ENCODE measurements at regions of chr11 and their contacts with region 1.

Region 1: GRCh38 chr11:114197799-114198500 is 98.2 kb upstream of the NNMT start:
- DNase-seq: peak; percentile 50 to 93
- H3K4me3 ChIP-seq: peak overlapping the region in 1 of 2 donors; percentile 31
- H3K27ac ChIP-seq: peak overlapping the region; percentile 88 to 98
- H3K4me1 ChIP-seq: peaks cover 45 to 83% of the 10 kb centered on the region in 2 donors
- H3K27me3 ChIP-seq: no peaks in the 10 kb centered on the region
- CTCF ChIP-seq: no peak

Region 2: GRCh38 chr11:113634940-113635575 is 562.9 kb before region 1 on chr11:
- intact Hi-C with region 1: no loop called
- DNase-seq: no peak
- H3K4me3 ChIP-seq: no peak overlapping the region
- H3K27ac ChIP-seq: peak overlapping the region in 1 of 2 donors; percentile 20
- H3K4me1 ChIP-seq: peaks cover 4 to 19% of the 10 kb centered on the region in 2 donors
- H3K27me3 ChIP-seq: no peaks in the 10 kb centered on the region
- CTCF ChIP-seq: no peak

Region 3: DNA sequence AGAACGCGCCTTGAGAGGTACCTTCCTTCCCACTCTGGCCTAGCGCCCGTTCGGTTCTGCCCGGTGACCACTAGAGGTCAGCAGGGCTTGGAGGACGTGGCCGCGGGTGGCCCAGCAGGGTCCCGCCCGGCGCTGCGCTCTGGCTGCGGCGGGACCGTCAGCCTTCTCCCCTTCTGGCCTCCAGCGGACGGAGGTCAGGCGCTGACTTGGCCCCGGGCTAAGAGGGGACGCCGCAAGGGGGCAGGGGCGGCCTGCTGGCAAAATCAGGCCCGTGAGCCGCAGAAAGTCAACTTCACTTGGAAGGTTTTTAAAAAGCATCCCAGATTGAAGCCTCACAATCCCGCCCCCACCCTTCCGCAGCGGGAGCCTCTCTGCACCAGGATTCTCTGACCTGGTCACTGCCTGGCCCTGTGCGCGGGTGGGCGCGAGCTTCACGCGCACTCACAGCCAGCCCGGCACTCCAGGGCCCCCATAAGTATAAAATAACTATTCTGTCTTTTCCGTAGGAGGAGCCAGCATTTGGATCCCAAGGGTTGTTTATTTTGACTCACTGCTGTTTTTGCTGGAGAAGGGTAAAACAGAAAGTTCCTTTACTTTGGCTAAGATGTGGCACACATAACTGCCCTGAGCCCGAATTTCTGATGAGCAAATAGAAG is 161.7 kb before region 1 on chr11:
- intact Hi-C with region 1: loop called (anchors 5 kb)
- DNase-seq: peak; percentile 27 to 88
- H3K4me3 ChIP-seq: peak overlapping the region; percentile 57 to 59
- H3K27ac ChIP-seq: peak overlapping the region; percentile 77 to 87
- H3K4me1 ChIP-seq: peaks cover 0 to 26% of the 10 kb centered on the region in 2 donors
- H3K27me3 ChIP-seq: no peaks in the 10 kb centered on the region
- CTCF ChIP-seq: peak; percentile 88 to 91 (median 90)

Region 4: DNA sequence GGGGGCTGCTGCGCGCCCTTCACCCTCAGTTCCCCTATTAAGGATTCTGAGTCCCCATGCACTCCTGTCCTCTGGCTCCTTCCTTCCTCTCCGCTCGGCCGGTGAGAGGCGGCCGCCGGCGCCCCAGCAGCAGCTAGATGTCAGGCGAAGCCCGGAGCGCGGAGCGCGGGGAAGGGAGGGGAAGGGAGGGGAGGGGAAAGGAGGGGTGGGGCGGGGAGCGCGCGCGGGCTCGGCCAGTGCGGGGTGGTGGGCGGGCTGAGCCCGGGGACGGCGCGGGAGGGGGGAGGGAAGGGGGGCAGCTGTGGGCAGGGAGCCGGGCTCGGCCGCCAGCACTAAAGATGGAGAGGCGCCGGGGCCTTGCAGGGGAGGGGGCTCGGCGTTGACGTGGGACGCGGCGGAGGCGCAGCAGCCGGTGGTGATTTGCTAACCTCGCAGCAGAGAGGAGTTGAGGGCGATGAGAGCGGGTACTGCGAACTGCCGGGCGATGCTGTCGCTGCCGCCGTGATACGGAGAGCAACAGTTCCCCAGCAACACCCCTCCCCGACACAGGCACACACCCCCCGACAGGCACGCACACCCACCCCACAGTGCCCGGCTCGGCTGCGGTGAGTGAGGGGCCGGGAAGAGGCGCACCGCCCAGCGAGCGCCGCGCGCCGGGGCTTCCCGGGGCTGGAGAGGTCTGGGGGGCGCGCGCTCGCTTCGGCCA is 138.5 kb before region 1 on chr11 and contains the start of gene ZBTB16:
- intact Hi-C with region 1: loop called (anchors 5 kb)
- DNase-seq: peak; percentile 54 to 94
- H3K4me3 ChIP-seq: peak within 1 kb of the TSS; percentile 87 to 99
- H3K27ac ChIP-seq: peak within 1 kb of the TSS; percentile 97 to 98
- H3K4me1 ChIP-seq: peaks cover 4 to 17% of the 10 kb centered on the region in 2 donors
- H3K27me3 ChIP-seq: no peaks in the 10 kb centered on the region
- CTCF ChIP-seq: peak; percentile 6 to 75 (median 40)
- total RNA-seq, gene ZBTB16: 344 TPM

Region 5: DNA sequence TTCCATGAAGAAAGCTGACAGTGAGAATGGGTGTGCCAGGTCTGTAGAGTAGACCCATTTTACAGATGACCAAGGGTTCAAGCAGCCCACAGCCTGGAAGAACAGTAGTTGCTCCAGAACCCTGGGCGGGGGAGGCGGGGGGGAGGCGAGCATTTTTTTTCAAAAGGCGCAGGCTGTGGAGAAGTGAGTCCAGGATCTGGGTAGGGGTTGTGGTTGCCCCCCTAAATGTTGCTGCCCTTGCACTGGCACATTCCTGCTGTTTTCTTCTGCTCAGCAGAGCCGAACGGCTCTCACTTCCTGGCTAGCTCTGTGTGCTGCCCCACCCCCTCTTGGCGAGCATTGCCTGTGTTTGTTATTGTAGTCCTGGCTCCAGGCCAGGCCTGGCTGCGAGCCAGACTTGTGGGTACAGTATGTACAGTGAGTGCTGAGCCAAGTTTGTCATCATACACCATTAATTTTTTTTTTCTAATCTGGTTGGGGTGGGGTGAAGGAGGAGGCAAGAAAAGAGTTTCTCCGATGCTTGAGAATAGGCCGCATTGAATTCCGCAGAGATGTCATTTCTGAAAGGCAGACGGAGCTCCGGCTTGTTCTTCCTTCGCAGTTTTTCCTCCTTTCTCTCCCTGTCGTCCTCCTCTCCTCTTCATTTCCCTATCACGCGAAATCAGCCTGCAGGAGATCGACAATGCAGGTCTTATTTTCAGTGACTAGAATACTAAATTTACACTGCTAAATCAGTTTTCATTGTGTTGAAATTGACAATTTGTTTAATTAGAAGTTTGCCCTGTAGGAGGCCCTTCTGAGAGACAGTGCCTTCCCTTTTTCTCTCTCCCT is 37.9 kb before region 1 on chr11:
- intact Hi-C with region 1: no loop called
- DNase-seq: peak; percentile 98 to 100
- H3K4me3 ChIP-seq: peak overlapping the region; percentile 44 to 48
- H3K27ac ChIP-seq: peak overlapping the region; percentile 92 to 99
- H3K4me1 ChIP-seq: peaks cover 58 to 93% of the 10 kb centered on the region in 2 donors
- H3K27me3 ChIP-seq: no peaks in the 10 kb centered on the region
- CTCF ChIP-seq: no peak

Region 6: DNA sequence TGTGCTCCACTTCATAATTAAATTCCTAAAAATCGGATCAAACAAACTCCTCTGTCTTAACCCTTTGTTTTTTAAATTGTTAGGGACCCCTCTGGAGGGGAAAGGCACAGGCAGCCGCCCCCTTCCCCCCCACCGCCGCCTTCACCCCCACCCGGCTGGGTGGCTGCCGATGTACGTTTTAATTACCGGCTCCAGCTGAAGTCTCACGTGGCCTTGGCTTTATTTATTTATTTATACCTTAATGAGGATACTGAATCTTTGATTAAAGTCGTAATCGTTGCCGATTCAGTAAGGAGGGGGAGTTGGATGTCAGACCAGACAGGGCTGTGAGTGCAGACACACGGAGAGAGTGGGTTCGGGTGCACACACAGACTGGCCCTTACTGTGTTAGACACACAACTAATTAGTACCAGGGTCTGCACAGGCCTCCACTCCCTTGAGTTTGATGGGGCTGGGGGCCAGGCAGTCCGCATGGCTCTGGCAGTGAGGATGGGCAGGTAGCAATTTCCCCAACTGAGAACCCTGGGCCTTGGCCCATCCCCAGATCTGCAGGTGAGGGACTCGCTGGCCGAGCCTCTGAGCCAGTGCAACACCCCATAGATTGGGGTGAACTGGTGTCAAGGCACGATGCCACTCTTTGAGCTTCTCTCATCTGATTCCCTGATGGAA is 46.9 kb after region 1 on chr11:
- intact Hi-C with region 1: loop called (anchors 5 kb)
- DNase-seq: no peak
- H3K4me3 ChIP-seq: no peak overlapping the region
- H3K27ac ChIP-seq: peak overlapping the region in 1 of 2 donors; percentile 47
- H3K4me1 ChIP-seq: peaks cover 0 to 24% of the 10 kb centered on the region in 2 donors
- H3K27me3 ChIP-seq: no peaks in the 10 kb centered on the region
- CTCF ChIP-seq: no peak